ENCODE measurements at regions of chr20 and their contacts with region 1.

Region 1: GRCh38 chr20:58888521-58889333 is 36.2 kb downstream of the GNAS start:
- DNase-seq: peak; percentile 83
- ATAC-seq: peak; percentile 49
- H3K4me3 Mint-ChIP-seq: peak overlapping the region; percentile 85
- H3K27ac Mint-ChIP-seq: peak overlapping the region; percentile 85
- H3K4me1 Mint-ChIP-seq: peaks cover 24% of the 10 kb centered on the region
- H3K27me3 Mint-ChIP-seq: no peaks in the 10 kb centered on the region

Region 2: DNA sequence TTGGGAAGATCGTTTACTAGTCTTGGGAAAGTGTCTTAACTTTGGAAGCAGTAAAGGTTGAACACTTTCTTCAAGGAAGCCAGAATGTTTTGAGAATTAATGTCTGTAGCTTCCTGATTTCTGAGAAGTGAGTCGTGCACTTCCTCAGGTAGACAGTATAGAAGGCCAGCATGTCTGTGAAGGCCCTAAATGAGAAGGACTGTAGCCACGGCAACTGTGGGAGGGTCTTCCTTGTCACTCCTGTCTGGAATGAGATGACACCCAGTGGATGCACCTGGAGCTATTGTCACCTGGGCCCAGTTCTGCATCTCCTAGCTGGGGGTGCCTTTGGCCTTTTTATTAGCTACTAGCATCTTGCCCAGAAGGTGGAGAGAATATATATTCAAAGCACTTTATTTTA is 228.9 kb before region 1 on chr20:
- POLR2A ChIA-PET with region 1: interaction called, 21 read pairs
- DNase-seq: no peak
- ATAC-seq: peak; percentile 56
- H3K4me3 Mint-ChIP-seq: peak overlapping the region; percentile 75
- H3K27ac Mint-ChIP-seq: peak overlapping the region; percentile 79
- H3K4me1 Mint-ChIP-seq: peaks cover 65% of the 10 kb centered on the region
- H3K27me3 Mint-ChIP-seq: no peaks in the 10 kb centered on the region

Region 3: DNA sequence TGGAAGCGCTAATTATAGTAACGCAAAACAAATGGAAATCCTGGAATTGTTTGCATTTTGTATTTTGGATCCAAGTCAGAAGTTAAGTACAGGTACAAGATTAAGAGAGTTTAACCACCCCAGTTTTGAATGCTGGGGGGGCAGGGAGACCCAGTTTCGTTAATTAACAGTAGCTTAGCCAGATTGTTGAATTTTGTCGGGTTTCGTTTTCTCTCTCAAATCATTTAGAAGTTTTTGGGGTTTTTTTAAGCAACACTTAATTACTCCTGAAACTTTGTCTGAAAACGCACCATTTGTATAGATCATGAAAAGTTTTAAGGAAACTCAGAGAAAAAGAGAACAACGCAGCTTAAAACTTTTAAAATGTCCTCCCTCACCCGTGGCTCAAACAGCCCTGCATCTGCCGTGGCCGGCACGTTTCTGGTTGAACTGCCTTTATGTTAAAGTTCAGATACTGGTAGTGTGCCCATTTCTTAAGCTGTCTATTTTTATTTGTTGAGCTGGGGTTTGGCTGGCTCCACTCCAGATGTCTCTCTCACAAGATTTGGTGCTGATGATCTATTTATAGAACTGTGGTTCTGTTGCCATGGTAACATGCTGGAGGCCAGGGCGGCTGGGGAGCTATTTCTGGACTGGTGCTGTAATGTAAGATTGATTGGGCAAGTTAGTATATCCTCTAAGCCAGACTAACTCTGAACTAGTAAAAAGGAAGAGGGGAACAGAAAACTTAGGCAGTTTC is 18.8 kb after region 1 on chr20:
- POLR2A ChIA-PET with region 1: interaction called, 13 read pairs
- DNase-seq: peak; percentile 45
- ATAC-seq: peak; percentile 80
- H3K4me3 Mint-ChIP-seq: peak overlapping the region; percentile 80
- H3K27ac Mint-ChIP-seq: peak overlapping the region; percentile 84
- H3K4me1 Mint-ChIP-seq: peaks cover 58% of the 10 kb centered on the region
- H3K27me3 Mint-ChIP-seq: no peaks in the 10 kb centered on the region

Region 4: DNA sequence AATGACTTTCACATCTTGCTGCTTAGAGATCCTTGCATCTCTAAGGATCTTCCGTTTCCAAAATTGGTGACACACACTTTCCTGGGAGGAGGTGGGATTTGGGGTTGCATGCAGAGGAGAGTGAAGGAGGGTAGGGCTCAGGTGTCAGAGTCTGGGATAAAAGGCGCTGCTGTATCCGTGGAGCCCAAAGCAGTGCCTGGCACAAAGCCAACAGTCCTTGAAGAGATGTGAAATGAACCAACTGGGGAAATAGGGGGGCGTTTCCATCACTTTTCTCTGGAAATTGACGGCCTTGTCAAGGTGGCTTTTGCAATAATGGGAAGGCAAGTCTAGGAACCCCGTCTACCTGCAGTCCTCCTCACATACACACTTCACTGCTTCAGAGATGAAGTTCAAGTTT is 32.8 kb after region 1 on chr20:
- POLR2A ChIA-PET with region 1: no interaction called
- DNase-seq: no peak
- ATAC-seq: no peak
- H3K4me3 Mint-ChIP-seq: no peak overlapping the region
- H3K27ac Mint-ChIP-seq: no peak overlapping the region
- H3K4me1 Mint-ChIP-seq: no peaks in the 10 kb centered on the region
- H3K27me3 Mint-ChIP-seq: peaks cover 9% of the 10 kb centered on the region

Region 5: DNA sequence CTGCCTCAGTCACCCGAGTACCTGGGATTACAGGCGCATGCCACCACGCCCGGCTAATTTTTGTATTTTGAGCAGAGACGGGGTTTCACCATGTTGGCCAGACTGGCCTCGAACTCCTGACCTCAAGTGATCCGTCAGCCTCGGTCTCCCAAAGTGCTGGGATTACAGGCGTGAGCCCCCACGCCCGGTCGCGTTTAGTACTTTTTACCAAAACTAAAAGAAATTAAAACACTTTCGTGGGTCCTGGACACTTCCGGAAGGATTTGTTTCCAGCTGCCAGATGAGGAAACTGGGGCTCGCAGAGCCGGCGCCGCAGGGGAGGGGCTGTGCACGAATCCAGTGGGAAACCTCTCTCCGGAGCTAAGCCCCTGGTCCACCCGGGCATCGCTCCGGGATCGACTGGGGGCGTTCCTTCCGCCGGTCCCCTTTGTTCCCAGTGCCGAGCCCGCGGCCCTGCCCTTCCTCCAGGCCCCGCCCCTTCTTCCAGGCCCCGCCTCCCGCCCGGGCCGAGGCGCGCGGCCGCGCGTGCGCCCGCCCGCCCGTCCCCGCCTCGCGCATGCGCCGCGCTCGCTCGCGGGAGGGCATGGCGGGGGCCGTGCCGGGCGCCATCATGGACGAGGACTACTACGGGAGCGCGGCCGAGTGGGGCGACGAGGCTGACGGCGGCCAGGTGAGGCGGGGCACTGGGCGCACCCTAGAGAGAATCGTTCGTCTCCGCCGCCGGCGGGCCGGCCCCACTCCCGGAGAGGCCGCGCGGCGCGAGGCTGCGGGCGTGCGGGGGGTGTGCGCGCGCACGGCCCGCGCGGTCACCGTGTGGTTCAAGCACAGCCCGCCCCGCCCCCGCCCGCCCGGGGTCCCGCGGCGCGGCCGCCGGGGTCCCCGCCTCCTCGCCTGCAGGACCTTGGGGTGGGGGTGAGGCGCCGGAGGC is 92.2 kb after region 1 on chr20 and contains the start of gene NELFCD:
- POLR2A ChIA-PET with region 1: interaction called, 14 read pairs
- DNase-seq: peak; percentile 97
- ATAC-seq: peak; percentile 91
- H3K4me3 Mint-ChIP-seq: peak within 1 kb of the TSS; percentile 91
- H3K27ac Mint-ChIP-seq: peak within 1 kb of the TSS; percentile 81
- H3K4me1 Mint-ChIP-seq: peaks cover 21% of the 10 kb centered on the region
- H3K27me3 Mint-ChIP-seq: no peaks in the 10 kb centered on the region
- total RNA-seq, gene NELFCD: 71.7 to 76.4 TPM

Region 6: GRCh38 chr20:59042796-59043660 is 154.3 kb after region 1 on chr20:
- POLR2A ChIA-PET with region 1: interaction called, 13 read pairs
- DNase-seq: peak; percentile 98
- ATAC-seq: peak; percentile 99
- H3K4me3 Mint-ChIP-seq: peak overlapping the region; percentile 93
- H3K27ac Mint-ChIP-seq: peak overlapping the region; percentile 89
- H3K4me1 Mint-ChIP-seq: peaks cover 47% of the 10 kb centered on the region
- H3K27me3 Mint-ChIP-seq: no peaks in the 10 kb centered on the region